Left ventricle myocardium superior (tissue), 1 donor: ENCODE measurements at regions of chr1 and their contacts with region 1.

Region 1: GRCh38 chr1:94329986-94330385 is 88.2 kb upstream of the ABCD3 start:
- DNase-seq: no peak
- ATAC-seq: peak; percentile 46

Region 2: DNA sequence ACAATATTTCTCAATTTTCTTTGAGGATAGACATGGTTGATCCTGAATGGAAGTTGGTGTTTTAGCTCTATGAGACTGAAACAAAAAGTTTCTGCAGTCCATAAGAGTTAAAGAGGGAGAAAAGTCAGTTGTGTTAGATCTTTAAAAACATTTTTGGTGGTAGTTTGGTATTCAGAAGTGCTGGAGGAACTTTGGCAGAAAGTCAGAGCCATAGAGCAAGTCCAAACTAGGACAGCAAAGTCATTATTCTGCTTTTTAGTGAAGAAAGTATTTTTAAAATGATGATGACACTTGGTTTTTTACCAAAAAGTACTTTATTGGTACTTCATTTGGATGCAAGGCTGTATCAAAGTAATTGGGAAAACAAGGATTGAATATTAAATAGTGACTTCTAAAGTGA is 840.2 kb before region 1 on chr1:
- intact Hi-C with region 1: no loop called
- DNase-seq: no peak
- ATAC-seq: no peak

Region 3: GRCh38 chr1:94045465-94046056 is 284.4 kb before region 1 on chr1:
- intact Hi-C with region 1: loop called (anchors 5 kb)
- DNase-seq: peak; percentile 93
- ATAC-seq: peak; percentile 92

Region 4: DNA sequence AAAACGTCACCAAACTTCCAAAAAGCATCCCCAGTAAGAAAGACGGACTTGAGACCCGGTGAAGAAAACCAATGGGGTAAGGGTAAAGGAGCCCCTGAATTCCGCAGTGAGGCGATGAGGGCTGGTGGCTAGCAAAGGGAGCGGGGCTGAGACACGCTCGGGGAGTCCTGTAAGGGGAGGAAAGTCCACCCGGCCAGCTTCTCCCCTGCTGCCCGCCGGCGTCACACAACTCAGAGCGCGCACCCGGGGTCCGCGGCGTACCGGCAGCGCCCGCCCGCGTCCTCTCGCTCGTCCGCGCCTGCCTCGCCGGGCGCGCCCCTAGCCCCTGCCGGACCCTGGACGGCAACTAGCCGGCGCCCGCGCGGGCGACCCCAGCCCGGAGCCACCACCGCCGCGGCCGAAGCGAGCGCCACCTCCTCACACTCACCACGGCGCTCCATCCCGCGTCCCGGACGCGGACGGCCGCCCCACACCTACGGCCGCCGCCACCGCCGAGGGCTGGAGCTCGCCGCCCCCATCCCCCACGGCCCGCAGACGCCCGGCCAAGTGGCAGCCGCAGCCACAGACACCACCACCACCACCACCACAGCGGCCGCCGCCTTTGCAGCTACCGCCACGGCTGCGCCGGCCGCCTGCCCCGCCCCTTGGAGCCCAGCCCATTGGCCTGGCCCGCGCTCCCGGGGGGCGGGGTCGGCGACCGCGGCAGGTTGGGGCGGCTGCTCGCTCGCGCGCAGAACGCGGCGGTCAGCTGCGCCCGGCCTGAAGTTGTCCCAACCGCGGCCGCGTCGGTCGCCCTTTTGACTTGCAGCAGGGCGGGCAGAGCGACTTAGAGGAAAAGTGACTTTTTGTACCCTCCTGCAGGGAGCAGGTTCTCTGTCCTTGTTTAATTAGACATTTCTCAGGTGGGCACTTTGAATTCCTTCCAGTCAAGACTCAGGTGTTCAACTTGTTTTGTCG is 82.6 kb before region 1 on chr1:
- intact Hi-C with region 1: loop called (anchors 10 kb)
- DNase-seq: peak; percentile 90
- ATAC-seq: peak; percentile 98